AG04449 (cell line): ENCODE measurements at regions of chr2 and their contacts with region 1.

Region 1: DNA sequence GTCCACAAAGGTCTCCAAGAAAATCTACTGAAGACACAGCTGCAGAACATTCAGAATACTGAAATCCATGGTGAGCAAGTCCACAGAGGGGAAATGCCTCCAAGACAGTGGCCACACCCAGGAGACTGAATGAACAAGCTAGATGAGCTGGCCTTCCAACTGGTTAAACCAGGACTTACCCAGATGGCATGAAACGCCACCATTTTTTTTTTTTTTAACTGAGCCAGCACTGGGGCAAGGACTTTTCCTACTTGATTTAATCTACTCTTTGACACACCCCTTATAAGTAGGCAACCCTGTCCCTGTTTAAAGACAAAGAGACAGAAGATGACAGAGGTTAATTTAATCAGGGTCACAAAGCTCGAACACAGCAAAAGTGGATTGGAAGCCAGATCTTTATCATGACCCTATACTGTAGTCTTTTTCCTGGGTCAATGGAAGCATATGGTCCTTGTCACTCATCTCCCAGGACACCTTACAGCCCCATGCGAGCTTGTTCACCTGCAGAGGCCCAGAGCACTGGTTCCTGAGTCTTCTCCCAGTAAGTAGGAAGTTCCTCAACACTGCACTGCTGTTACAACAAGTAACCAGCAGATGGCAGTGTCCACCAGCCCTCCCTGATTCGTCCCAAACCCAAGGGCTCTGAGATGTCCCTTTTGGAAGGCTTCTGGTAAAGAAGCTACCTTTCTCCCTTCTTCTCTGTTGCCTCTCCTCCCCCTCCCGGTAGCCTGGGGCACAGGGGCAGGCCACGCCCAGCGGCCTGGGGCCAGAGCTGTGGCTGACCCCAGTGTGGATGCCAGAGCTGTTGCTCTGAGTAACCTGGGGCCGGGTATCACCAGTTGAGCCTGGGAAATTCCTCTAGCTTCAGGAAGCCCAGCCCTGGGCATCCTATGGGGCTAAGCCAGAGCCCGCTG is 5.6 kb upstream of the GDF7 start:
- DNase-seq: peak; percentile 28
- H3K4me3 ChIP-seq: no peak overlapping the region
- CTCF ChIP-seq: peak; percentile 90

Region 2: DNA sequence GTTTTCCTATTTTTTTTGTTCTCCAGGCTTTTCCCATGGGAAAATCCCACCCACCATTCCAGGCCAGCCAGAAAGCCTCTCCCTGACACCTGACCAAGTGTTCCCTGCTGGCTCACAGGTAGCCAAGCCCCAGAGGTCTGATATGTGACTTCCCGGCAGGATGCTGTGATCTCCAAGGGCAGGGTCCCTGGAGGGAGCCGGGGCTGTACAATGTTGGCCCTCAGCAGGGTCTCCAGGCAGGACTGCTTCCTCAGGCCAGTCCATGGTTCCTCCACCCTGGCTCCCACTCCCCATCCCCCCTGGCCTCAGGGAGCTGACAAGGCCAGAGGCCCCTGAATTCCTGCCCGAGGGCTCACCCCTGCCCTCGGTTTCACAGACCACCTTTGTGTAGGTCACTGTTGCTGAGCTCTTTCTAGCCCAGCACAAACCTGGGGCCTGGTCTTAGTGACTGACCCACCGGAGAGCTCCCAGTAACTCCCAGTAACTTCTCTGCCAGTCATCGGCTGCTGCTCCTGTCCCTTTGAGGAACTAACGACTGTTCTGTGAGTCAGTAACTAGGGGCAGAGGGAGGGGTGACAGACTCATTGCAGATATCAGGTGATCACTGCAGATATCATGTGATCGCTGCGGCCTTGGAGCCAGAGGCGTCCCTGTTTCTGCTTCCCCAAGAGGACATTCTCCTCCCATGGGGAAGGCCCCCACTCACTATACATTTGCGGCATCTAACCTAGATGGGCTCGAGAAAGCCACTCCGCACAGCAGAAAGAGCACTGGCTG is 475.1 kb before region 1 on chr2:
- CTCF ChIA-PET with region 1: no interaction called
- POLR2A ChIA-PET with region 1: no interaction called
- DNase-seq: no peak
- H3K4me3 ChIP-seq: no peak overlapping the region
- CTCF ChIP-seq: no peak

Region 3: DNA sequence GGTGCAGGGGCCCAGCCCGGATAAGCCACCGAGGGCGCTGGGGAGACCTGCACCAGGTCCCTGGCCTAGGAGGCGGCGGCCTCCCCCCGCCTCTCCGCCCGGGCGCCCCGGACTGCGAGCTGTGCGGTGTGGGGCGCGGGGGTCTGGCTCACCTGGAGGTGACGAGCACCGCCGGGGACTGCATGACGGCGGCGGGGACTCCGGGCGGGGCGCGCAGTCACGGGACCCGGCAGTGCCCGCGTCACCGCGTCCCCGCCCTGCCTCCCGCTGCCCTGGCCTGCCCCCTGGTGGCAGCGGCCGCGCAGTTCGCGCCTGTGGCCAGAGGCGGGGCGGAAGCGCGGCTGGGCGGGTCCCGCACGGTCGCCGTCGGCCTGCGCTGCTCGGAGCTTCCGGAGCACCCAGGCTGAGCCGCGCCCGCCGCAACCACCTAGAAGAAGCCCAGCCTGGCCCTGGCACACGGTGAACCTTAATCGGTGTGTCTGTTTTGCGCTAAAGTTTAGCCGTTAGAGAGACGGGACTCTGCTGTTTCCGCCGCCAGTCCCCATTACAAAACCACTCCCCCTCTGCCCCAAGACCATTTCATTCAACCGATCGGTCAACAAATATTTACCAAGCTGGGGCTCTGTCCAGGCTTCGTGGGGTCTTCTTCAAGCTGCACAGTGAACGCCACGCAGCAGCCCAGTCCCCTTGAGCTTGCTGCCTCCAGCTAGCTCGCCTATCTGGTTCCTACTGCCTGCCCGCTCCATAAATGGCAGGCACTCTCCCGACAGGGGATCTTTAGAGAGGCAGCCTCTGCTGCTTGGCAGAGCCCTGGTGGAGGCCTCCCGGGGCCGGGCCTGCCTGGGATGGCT is 10.2 kb before region 1 on chr2 and contains the start of gene HS1BP3:
- CTCF ChIA-PET with region 1: interaction called, 148 read pairs
- POLR2A ChIA-PET with region 1: no interaction called
- DNase-seq: no peak
- H3K4me3 ChIP-seq: peak within 1 kb of the TSS; percentile 91
- CTCF ChIP-seq: peak; percentile 81

Region 4: GRCh38 chr2:20682167-20682920 is 21.0 kb after region 1 on chr2:
- CTCF ChIA-PET with region 1: interaction called, 108 read pairs
- POLR2A ChIA-PET with region 1: no interaction called
- DNase-seq: no peak
- H3K4me3 ChIP-seq: no peak overlapping the region
- CTCF ChIP-seq: peak; percentile 71

Region 5: GRCh38 chr2:20758997-20759396 is 97.7 kb after region 1 on chr2:
- CTCF ChIA-PET with region 1: interaction called, 20 read pairs
- POLR2A ChIA-PET with region 1: no interaction called
- DNase-seq: no peak
- H3K4me3 ChIP-seq: no peak overlapping the region
- CTCF ChIP-seq: no peak

Region 6: GRCh38 chr2:20822535-20823490 is 161.5 kb after region 1 on chr2 and contains the start of gene LDAH:
- CTCF ChIA-PET with region 1: interaction called, 12 read pairs
- POLR2A ChIA-PET with region 1: no interaction called
- DNase-seq: peak; percentile 19
- H3K4me3 ChIP-seq: peak within 1 kb of the TSS; percentile 98
- CTCF ChIP-seq: no peak

Region 7: GRCh38 chr2:20962939-20963557 is 301.7 kb after region 1 on chr2:
- CTCF ChIA-PET with region 1: interaction called, 382 read pairs
- POLR2A ChIA-PET with region 1: no interaction called
- DNase-seq: no peak
- H3K4me3 ChIP-seq: no peak overlapping the region
- CTCF ChIP-seq: peak; percentile 89

Region 8: DNA sequence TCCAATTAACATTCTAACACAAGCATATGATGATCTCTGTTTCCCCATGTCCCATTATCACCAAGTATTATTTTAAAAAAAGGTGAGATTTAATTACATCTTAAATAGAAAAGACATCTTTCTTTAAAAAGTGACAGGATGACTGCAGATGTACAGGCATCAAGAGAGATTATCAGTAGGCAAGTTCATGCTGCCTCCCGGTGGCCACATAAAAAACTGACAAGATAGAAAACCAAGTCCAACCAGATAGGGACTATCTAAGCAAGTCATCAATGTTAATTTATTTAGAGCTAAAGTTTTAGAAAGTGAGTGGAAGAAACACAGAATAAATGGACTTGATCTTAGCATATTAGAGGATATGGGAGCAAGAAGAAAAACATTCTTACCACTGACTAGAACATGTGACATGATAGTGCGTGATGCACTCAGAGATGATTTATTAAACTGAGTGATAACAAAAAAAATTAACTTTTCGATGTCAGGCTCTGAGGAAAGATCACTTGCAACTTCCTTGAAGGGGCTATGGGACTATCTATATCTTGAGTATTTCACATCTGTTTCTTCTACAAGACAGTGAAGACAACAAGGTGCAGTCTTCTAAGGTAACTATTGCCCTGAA is 457.1 kb after region 1 on chr2:
- CTCF ChIA-PET with region 1: interaction called, 27 read pairs
- POLR2A ChIA-PET with region 1: no interaction called
- DNase-seq: no peak
- H3K4me3 ChIP-seq: no peak overlapping the region
- CTCF ChIP-seq: peak; percentile 13